HCT116 (cell line): ENCODE measurements at regions of chr19 and their contacts with region 1.

Region 1: DNA sequence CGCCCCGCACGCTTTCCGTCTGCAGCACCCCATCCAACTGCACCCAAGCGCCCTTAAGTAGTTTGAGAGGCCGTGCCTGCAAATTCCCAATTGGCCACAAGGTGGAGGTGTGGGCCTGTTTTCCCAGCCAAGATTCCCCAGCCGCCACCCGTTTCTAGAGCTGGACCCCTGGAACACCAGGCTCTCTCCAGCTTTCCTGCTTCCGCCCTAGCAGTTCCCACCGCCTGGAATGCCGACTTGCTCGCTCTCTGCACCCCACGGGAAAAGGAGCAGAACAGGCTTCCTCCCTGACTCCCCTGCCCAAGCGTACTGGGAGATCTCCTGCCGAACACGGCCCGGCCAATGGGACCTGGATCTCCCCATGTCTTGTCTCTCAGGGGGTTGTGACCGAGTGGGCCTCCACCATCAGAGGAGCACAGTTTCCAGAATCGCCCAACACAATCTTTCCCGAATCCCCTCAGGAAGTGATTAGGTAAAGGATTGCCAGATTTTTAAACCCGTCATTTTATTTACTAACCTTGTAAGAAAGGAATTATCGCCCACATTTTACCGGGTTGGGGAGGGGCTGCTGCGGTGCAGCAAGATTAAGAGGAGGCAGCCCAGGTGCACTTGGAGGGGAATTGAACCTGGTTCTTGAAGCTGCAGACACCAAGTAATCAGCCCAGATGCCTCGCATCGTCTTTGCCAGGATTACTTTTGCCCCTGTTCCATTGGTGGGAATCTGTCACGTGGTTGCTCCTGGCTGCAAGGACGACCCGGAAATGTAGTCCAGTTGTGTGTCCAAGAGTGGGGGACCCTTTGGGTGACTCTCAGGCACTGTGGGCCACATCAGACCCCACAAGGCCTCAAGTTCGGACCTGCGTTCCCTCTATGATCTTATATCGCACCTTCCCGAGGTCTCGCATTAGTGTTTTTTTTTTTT is 3.5 kb upstream of the NAPSA start:
- DNase-seq: peak; percentile 74
- ATAC-seq: peak; percentile 91
- H3K4me3 ChIP-seq: peak overlapping the region; percentile 67 to 74
- H3K27ac ChIP-seq: peak overlapping the region; percentile 67
- H3K4me1 ChIP-seq: peaks cover 3 to 16% of the 10 kb centered on the region in 2 experiments; a peak in 3 of 4 replicates
- H3K27me3 ChIP-seq: no peaks in the 10 kb centered on the region
- CTCF ChIP-seq: peak; percentile 79 to 87 (median 80)
- POLR2A ChIP-seq: peak; percentile 67
- RAD21 ChIP-seq: peak; percentile 92

Region 2: DNA sequence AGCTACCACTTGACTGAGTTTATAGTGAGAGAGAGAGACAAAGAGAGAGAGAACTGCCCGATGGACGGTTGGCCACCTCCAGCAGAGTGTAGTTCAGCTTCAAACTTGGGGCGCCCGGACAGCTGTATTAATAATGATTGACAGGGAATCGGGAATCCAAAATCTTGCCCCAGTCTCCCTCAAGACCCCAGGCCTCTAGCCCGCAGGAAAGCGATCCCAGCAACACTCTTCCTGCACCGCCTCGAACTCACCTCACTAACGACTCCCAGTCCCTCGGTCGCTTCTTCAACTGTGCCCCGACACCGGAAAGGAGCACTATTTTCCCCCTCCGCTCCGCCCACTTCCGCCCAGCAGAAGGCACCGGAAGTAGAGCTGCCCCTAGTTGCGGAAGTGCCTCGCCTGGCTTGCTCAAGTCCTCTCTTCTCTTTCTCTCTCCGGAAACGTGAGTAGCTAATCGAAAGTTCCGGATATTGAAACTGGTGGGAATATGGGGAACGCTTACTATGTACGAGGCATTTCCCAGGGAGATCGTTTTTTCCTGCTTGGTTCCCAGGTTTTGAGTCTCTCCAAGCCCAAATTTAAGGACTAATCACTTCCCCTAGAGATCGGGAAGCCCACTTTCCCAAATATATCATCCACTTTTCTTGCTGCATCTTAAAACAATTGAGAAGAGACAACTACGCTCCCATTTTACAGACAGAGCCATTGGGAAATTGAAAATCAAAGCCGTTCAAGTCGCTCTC is 788.5 kb before region 1 on chr19 and contains the start of gene NOSIP:
- CTCF ChIA-PET with region 1: no interaction called
- POLR2A ChIA-PET with region 1: no interaction called
- RAD21 ChIA-PET with region 1: no interaction called
- intact Hi-C with region 1: no loop called
- DNase-seq: peak; percentile 95
- ATAC-seq: peak; percentile 85
- H3K4me3 ChIP-seq: peak within 1 kb of the TSS; percentile 86 to 99
- H3K27ac ChIP-seq: peak within 1 kb of the TSS; percentile 56
- H3K4me1 ChIP-seq: peaks cover 18 to 50% of the 10 kb centered on the region in 2 experiments
- H3K27me3 ChIP-seq: no peaks in the 10 kb centered on the region
- CTCF ChIP-seq: no peak
- POLR2A ChIP-seq: peak; percentile 97
- RAD21 ChIP-seq: no peak
- total RNA-seq, gene NOSIP: 133 TPM

Region 3: DNA sequence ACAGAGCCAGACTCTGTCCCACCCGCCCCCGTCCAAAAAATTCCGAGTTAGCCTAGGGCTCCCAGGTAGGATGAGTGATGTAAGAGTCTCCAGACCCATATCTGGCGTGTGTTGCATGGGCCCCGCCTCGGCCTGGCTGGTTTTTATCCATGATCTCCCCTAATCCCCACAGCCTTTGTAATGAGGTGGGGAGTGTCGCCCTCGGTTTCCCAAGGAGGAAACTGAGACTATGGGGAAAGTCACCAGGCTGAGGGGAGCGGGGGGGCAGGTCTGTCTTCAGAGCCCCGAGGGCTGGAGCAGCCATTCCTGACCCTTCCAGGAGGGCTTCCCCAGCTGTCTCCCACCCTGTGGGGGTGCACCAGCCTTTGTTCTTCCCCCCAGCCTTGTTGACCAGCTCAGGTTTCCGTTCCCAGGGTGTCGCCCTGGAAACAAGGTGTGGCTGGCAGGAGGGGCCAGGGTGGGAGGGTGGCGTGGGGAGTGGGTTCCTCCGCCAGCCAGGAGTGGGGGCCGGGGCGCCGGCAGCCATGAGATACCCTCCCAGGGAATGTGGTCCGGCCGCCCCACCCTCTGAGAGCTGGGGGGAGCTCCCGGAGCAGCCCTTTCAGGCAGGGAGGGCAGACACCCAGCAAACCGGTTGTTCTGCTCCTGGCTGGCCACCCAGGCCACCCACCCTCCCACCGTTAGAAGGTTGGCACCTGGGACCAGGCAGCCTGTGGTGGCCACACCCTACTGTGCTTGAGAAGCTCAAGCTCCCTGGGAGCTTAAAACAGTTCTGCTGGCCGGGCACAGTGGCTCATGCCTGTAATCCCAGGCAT is 153.9 kb before region 1 on chr19:
- CTCF ChIA-PET with region 1: no interaction called
- POLR2A ChIA-PET with region 1: no interaction called
- RAD21 ChIA-PET with region 1: no interaction called
- intact Hi-C with region 1: no loop called
- DNase-seq: peak; percentile 52
- ATAC-seq: peak; percentile 94
- H3K4me3 ChIP-seq: peak overlapping the region; percentile 15 to 50; a peak in 3 of 4 replicates
- H3K27ac ChIP-seq: peak overlapping the region; percentile 54
- H3K4me1 ChIP-seq: peaks cover 22 to 28% of the 10 kb centered on the region in 2 experiments
- H3K27me3 ChIP-seq: no peaks in the 10 kb centered on the region
- CTCF ChIP-seq: no peak
- POLR2A ChIP-seq: no peak
- RAD21 ChIP-seq: no peak

Region 4: GRCh38 chr19:50414864-50415660 is 46.2 kb after region 1 on chr19:
- CTCF ChIA-PET with region 1: interaction called, 4 read pairs
- POLR2A ChIA-PET with region 1: no interaction called
- RAD21 ChIA-PET with region 1: no interaction called
- intact Hi-C with region 1: loop called (anchors 2 kb)
- DNase-seq: peak; percentile 16
- ATAC-seq: peak; percentile 83
- H3K4me3 ChIP-seq: no peak overlapping the region
- H3K27ac ChIP-seq: peak overlapping the region; percentile 43; the same call in 1 of the 2 replicates
- H3K4me1 ChIP-seq: no peaks in the 10 kb centered on the region
- H3K27me3 ChIP-seq: no peaks in the 10 kb centered on the region
- CTCF ChIP-seq: peak; percentile 43 to 92 (median 90); a peak in 5 of 6 replicates
- POLR2A ChIP-seq: no peak
- RAD21 ChIP-seq: no peak; the same call in 1 of the 2 replicates

Region 5: DNA sequence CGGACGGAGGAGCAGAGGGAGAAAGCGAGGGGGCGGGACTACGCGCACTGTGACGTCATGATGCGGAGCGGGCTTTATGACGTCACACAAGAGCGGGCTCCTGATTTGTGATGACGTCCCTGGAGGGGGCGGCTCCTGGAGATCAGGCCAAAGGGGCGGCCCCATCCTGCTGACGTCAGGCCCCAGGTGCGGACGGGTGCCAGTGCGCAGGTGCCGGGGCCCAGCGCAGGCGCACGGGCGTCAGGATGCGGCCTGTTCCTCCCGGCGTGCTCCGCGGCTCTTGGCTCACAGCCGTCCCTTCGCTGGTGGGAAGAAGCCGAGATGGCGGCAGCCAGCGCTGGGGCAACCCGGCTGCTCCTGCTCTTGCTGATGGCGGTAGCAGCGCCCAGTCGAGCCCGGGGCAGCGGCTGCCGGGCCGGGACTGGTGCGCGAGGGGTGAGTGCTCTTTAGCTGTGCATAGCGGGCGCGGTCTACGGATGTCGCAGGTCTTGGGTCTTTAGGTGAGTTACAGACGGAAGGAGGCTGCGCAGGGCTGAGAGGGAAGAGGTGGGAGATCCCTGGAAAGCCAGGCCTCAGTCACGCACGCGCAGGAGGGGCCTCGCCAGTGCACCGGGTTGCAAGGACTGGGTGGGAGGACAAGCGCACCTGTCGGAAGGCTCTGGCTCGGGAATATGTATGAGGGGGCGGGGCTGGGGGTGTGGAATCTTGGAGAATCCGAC is 107.5 kb after region 1 on chr19 and contains the starts of genes EMC10 and GARIN5A:
- CTCF ChIA-PET with region 1: interaction called, 13 read pairs
- POLR2A ChIA-PET with region 1: interaction called, 3 read pairs
- RAD21 ChIA-PET with region 1: no interaction called
- intact Hi-C with region 1: loop called (anchors 1 kb)
- DNase-seq: peak; percentile 96
- ATAC-seq: peak; percentile 90
- H3K4me3 ChIP-seq: peak within 1 kb of the TSS; percentile 92 to 100
- H3K27ac ChIP-seq: peak within 1 kb of the TSS; percentile 93
- H3K4me1 ChIP-seq: peaks cover 9 to 21% of the 10 kb centered on the region in 2 experiments; a peak in 3 of 4 replicates
- H3K27me3 ChIP-seq: no peaks in the 10 kb centered on the region
- CTCF ChIP-seq: no peak
- POLR2A ChIP-seq: peak; percentile 92
- RAD21 ChIP-seq: no peak
- total RNA-seq, gene EMC10: 92.4 TPM
- total RNA-seq, gene GARIN5A: 12.2 TPM

Region 6: DNA sequence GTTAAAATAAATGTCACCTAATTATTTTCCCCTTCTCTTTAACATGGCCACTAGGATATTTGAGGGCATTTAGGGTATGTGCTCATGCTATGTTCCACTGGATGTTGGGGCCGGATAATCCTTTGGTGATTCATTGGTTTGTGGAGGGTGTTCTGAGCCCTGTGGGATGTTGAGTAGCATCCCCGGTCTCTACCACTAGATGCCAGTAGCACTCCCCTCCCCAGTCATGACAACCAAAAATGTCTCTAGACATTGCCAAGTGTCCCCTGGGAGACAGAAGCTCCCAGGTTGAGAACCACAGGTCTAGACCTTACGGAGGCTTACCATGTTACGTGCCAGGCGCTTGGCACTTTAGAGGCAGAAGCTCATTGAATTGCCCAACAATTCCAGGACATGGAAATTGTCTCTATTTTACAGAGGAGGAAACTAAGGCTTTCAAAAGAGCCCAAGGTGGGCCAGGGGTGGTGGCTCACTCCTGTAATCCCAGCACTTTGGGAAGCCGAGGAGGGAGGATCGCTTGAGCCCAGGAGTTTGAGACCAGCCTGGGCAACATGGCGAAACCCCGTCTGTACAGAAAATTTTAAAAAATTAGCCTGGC is 336.6 kb after region 1 on chr19:
- CTCF ChIA-PET with region 1: interaction called, 5 read pairs
- POLR2A ChIA-PET with region 1: no interaction called
- RAD21 ChIA-PET with region 1: no interaction called
- intact Hi-C with region 1: loop called (anchors 10 kb)
- DNase-seq: peak; percentile 56
- ATAC-seq: peak; percentile 87
- H3K4me3 ChIP-seq: no peak overlapping the region
- H3K27ac ChIP-seq: no peak overlapping the region
- H3K4me1 ChIP-seq: peaks cover 0 to 2% of the 10 kb centered on the region in 2 experiments; a peak in 2 of 4 replicates
- H3K27me3 ChIP-seq: no peaks in the 10 kb centered on the region; the same call in 1 of the 2 replicates
- CTCF ChIP-seq: peak; percentile 79 to 92 (median 85)
- POLR2A ChIP-seq: no peak
- RAD21 ChIP-seq: peak; percentile 87

Region 7: GRCh38 chr19:51097166-51097738 is 728.3 kb after region 1 on chr19:
- CTCF ChIA-PET with region 1: no interaction called
- POLR2A ChIA-PET with region 1: no interaction called
- RAD21 ChIA-PET with region 1: no interaction called
- intact Hi-C with region 1: loop called (anchors 10 kb)
- DNase-seq: peak; percentile 31
- ATAC-seq: peak; percentile 87
- H3K4me3 ChIP-seq: no peak overlapping the region
- H3K27ac ChIP-seq: no peak overlapping the region
- H3K4me1 ChIP-seq: peaks cover under 1 to 6% of the 10 kb centered on the region in 2 experiments; a peak in 2 of 4 replicates
- H3K27me3 ChIP-seq: no peaks in the 10 kb centered on the region
- CTCF ChIP-seq: peak; percentile 36 to 78 (median 65); a peak in 5 of 6 replicates
- POLR2A ChIP-seq: no peak
- RAD21 ChIP-seq: peak; percentile 60